ENCODE measurements at regions of chr12 and their contacts with region 1.

Region 1: GRCh38 chr12:118625050-118625675 is 248.8 kb downstream of the SUDS3 start:
- DNase-seq: peak in 3 of 7 donors; percentile 16 to 52 (median 23)
- H3K4me3 ChIP-seq: no peak overlapping the region
- H3K27ac ChIP-seq: peak overlapping the region in 2 of 5 donors; percentile 26 to 38
- H3K4me1 ChIP-seq: no peaks in the 10 kb centered on the region
- H3K27me3 ChIP-seq: no peaks in the 10 kb centered on the region
- CTCF ChIP-seq: no peak
- POLR2A ChIP-seq: no peak

Region 2: DNA sequence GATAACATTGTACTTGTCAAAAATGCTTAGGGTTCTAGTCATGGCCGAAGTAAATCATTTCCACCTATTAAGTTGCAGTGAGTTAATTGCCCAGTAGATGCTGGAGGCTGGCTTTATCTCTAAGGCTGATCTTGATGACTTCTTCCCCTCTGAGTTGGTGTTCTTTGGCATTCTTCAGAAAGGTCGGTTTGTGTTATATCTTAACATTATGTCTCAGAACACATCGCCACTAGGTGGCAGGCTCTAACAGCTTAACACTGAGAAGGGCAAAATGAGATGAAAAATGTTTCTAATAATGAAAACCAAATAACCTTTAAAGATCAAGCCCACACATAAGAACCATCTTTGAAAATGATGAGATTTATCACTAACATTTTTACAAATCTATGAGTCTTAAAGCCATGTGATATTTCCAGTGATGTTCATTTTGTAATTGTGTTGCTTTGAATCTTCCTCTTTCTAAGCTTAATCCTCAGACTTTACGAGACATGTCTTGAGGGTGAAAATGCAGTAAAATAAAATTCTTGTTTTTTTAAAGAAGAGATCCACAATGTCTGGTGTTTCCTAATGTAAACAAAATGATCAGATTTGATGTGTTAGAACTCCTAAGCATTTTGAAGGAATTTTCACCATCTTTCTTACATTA is 220.2 kb before region 1 on chr12:
- intact Hi-C with region 1: loop called in 1 of 2 experiments (anchors 10 kb)
- DNase-seq: peak; percentile 51 to 89 (median 69)
- H3K4me3 ChIP-seq: no peak overlapping the region
- H3K27ac ChIP-seq: no peak overlapping the region
- H3K4me1 ChIP-seq: no peaks in the 10 kb centered on the region
- H3K27me3 ChIP-seq: no peaks in the 10 kb centered on the region
- CTCF ChIP-seq: peak; percentile 61 to 86 (median 77)
- POLR2A ChIP-seq: no peak

Region 3: GRCh38 chr12:118912697-118913270 is 287.6 kb after region 1 on chr12:
- intact Hi-C with region 1: no loop called
- DNase-seq: no peak
- H3K4me3 ChIP-seq: no peak overlapping the region
- H3K27ac ChIP-seq: no peak overlapping the region
- H3K4me1 ChIP-seq: no peaks in the 10 kb centered on the region
- H3K27me3 ChIP-seq: no peaks in the 10 kb centered on the region
- CTCF ChIP-seq: no peak
- POLR2A ChIP-seq: no peak